ENCODE measurements at regions of chr17 and their contacts with region 1.

Region 1: GRCh38 chr17:17859909-17860765 is 23.4 kb upstream of the SREBF1 start:
- DNase-seq: peak; percentile 87
- CTCF ChIP-seq: peak; percentile 97

Region 2: DNA sequence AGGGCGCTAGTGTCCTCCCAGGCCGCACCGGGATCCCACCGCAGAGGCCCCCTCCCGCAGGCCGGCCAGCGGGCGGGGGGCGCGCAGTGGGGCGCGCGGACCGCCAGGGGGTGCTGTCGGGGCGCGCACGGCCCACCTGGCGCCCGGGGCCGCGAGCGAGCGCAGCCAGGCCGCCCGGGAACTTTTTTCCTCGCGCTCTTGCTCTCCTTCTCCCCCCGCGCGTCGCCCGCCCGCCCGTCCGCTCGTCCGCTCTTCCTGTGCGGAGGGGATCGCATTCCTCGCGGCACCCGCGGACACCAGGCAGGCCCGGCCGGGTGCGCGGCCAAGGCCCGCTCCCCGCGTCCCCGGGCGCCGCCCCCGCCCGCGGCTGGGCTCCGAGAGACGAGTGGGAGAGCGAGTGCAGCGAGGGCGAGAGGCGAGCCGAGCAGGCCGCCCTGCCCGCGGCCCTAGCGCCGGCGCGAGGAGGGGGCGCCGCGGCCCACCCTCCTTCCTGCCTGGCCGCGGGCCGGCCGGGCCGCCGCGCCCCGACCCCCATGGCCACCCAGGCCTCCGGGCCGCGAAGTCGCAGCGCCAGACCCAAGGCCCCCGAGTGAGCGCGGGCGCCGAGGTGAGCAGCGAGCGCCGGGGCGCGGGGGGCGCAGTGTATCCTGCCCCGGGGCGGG is 178.8 kb before region 1 on chr17 and contains the start of gene RAI1:
- in situ Hi-C with region 1: no loop called
- DNase-seq: peak; percentile 88
- CTCF ChIP-seq: peak; percentile 95

Region 3: DNA sequence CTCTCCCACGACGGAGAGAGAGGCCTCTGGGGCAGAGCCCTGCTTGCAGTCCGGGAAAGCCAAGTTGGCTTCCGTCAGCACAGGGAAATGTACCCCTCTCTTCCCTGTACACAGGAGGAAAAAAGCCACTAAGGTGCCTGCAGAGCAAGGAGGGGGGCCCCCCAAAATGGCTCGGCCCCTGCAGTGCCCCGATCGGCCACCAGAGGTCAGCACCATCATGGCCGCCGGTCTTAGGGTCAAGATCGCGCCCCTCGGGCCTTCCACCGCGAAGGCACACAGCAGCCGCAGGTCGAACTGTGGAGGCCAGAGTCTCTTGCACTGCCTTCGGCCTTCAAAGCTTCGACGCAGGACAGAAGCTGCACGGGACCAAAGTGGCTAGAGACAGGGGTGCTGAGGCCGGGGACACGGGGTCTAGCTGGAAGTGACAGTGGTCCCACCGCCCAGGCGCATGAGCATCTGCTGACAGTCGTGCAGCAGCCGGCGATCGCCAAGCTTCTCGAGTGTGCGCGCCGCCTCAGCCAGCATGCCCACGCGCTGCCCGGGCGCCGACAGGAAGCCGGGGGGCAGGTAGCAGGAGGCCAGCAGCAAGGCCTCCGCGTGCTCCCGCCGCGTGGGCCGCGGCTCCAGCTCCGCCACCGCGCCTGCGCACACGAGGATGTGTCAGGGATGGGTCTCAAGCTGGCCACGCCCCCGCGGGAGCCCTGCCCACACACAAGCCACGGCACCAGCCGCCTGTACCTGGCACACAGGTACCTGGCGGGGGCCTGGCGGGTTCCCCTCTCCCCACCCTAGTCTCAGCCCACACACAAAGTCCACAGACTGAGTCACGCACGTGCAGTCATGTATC is 47.7 kb before region 1 on chr17:
- in situ Hi-C with region 1: loop called (anchors 10 kb)
- DNase-seq: peak; percentile 92
- CTCF ChIP-seq: peak; percentile 97

Measured in GM13976 (cell line).